ENCODE measurements at regions of chr7 and their contacts with region 1.

Region 1: GRCh38 chr7:69893906-69894305 is 295.6 kb downstream of the AUTS2 start:
- DNase-seq: no peak
- ATAC-seq: peak in 2 of 4 donors; percentile 50 to 52
- H3K4me3 ChIP-seq: no peak overlapping the region
- H3K27ac ChIP-seq: no peak overlapping the region
- H3K4me1 ChIP-seq: no peaks in the 10 kb centered on the region
- H3K27me3 ChIP-seq: no peaks in the 10 kb centered on the region
- CTCF ChIP-seq: peak in 10 of 12 donors; percentile 21 to 59 (median 42)
- POLR2A ChIP-seq: no peak

Region 2: GRCh38 chr7:69429911-69430383 is 464.0 kb before region 1 on chr7:
- intact Hi-C with region 1: loop called in 1 of 10 experiments (anchors 10 kb)
- DNase-seq: peak; percentile 62 to 82 (median 68)
- ATAC-seq: peak in 3 of 4 donors; percentile 64 to 85 (median 71)
- H3K4me3 ChIP-seq: peak overlapping the region in 5 of 12 donors; percentile 5 to 25 (median 23)
- H3K27ac ChIP-seq: peak overlapping the region in 2 of 12 donors; percentile 9 to 68
- H3K4me1 ChIP-seq: peaks cover 0 to 18% (median 12%) of the 10 kb centered on the region in 12 donors
- H3K27me3 ChIP-seq: no peaks in the 10 kb centered on the region
- CTCF ChIP-seq: no peak
- POLR2A ChIP-seq: no peak

Region 3: DNA sequence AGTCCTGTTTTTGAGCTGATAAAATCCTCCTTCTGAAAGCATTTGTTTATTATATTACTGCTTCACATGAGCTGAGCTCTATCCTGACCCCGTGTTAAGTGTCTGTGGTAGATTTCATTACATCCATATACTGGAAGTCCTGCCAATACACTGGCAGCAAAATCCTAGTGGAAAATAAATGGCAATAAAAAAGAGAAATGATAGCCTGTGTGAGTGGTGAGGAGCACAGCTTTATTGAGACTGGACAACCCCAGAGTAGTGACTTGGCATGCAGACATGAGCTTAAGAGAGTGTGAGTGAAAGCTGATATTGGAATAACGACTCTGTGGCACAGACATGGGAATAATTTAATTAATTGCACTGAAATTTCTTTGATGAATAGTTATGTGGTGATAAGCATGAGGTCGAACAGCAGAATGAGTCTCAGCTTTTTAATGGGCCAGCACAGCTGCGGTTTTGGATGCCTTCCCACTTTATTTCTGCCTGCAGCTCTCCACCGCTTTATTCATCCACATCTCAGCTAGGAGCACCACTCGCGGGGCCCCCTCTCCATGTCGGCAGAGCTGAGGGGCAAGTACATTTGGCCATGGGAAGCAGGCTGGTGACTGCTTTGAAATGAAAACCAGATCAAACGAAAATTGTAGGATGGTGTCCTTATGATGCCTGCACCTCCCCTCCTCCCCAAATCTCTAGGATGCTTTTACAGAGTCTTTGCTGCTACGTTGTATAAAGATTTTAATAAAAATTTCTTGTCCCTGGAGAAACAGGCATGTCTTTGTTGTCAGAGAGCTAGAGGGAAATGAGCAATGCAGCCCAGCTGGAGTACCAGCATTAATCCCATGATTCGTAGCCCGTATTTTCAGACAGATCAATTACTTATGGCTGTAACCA is 198.7 kb after region 1 on chr7:
- intact Hi-C with region 1: loop called in 1 of 10 experiments (anchors 5 kb)
- DNase-seq: peak in 2 of 5 donors; percentile 30 to 34
- ATAC-seq: peak; percentile 47 to 78 (median 56)
- H3K4me3 ChIP-seq: peak overlapping the region in 6 of 12 donors; percentile 1 to 35 (median 14)
- H3K27ac ChIP-seq: no peak overlapping the region
- H3K4me1 ChIP-seq: peaks cover 0 to 28% (median 12%) of the 10 kb centered on the region in 12 donors
- H3K27me3 ChIP-seq: no peaks in the 10 kb centered on the region
- CTCF ChIP-seq: no peak
- POLR2A ChIP-seq: no peak